PC-9 (cell line): ENCODE measurements at regions of chr15 and their contacts with region 1.

Region 1: GRCh38 chr15:29668120-29668602 is 154.1 kb downstream of the TJP1 start:
- DNase-seq: peak; percentile 36 to 76
- H3K4me3 ChIP-seq: no peak overlapping the region
- H3K27ac ChIP-seq: no peak overlapping the region
- H3K4me1 ChIP-seq: 0 out of 2 replicates have a peak, but pooled peaks cover 5% of the 10 kb centered on the region
- H3K27me3 ChIP-seq: peaks cover 16% of the 10 kb centered on the region; the same call in 1 of the 2 replicates
- CTCF ChIP-seq: peak; percentile 71

Region 2: DNA sequence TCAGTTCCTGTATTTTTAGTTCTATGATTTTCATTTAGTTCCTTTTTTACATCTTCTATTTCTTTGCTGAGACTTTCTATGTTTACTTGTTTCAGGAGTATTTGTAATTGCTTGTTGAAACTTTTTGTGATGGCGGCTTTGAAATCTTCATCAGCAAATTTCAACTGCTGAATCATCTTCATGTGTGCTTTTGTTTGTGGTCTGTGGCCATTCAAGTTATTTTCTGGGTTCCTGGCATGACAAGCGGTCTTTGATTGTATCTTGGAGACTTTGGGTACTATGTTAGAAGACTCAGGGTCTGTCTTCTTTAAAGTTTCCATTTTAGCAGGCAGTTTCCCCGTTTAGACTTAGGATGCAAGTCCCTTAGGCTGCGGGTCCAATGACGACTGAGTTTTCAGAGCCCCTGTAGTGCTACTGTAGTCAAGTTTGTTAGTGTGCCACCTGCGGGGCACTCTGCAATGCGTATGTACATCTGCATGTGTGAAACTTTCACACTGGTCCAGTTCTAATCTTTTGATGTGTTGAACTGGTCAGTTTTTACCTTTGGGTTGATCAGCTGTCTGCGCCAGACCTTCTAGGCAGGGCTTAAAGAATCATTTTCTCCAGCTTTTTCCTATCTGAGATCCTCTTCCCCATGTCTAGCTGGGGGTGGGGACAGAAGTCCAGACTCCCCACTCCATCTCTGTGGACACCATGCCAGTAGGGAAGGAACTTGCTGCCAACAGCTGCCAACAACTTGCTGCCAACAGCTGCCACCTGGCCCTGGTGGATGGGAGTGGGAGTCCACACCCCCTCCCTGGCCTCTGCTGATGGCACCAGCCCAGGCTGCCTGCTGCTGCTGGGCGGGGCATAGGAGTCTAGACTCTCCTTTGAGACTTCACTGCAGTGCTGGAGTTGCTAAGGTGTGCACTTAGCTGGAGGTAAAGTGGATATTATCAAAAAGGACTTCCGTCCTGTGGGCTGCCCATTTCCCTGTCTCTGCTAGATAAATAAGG is 36.8 kb before region 1 on chr15:
- CTCF ChIA-PET with region 1: no interaction called
- POLR2A ChIA-PET with region 1: no interaction called
- intact Hi-C with region 1: no loop called
- DNase-seq: no peak
- H3K4me3 ChIP-seq: no peak overlapping the region
- H3K27ac ChIP-seq: no peak overlapping the region
- H3K4me1 ChIP-seq: no peaks in the 10 kb centered on the region
- H3K27me3 ChIP-seq: peaks cover 75% of the 10 kb centered on the region
- CTCF ChIP-seq: no peak

Region 3: DNA sequence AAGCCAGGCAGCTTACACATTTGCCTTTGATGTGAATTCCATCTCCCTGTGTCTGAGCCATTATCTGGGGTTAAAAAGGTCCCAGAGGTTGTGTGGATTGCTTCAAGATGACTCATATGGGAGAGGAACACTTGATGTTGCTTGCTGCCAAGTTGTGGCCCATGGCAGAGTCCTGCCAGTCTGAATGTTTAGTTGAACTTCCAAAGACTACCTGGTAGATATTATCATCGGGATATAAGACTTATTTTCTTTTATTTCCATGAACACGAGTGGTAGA is 68.5 kb after region 1 on chr15:
- CTCF ChIA-PET with region 1: no interaction called
- POLR2A ChIA-PET with region 1: no interaction called
- intact Hi-C with region 1: loop called (anchors 1 kb)
- DNase-seq: peak; percentile 59 to 79
- H3K4me3 ChIP-seq: no peak overlapping the region
- H3K27ac ChIP-seq: peak overlapping the region; percentile 5
- H3K4me1 ChIP-seq: peaks cover 29% of the 10 kb centered on the region
- H3K27me3 ChIP-seq: no peaks in the 10 kb centered on the region
- CTCF ChIP-seq: no peak

Region 4: DNA sequence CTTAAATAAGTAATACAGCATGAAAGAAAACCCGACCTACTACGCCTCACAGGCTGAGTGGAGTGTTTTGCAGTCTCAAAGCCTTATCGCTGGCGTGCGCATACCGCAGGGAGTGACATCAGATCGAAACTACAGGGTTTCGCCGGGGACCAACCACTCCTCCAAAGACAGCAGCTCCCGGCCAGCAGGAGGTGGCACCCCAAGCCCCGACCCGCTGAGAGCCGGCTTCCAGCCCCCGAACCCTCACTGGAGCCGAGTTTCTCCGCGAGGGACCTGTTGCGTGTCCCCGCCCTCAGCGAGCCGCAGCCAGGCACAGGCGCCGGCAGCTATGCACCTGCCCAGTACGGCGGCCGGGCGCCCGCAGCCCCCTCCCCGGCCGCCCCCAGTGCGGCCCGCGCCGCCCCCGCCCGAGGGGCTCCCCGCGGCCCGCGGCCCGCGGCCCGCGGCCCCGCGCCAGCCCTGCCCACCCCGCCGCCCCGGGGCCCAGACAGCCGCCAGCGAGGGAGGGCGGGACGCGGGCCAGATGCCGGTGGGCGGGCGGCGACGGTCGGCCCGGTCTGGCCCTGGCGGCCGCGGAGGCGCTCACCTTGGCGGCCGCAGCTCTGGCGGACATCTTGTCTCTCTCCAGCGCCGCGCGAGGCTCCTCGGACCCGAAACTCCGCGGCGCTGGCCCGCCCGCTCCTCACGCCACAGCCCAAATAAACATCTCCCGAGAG is 153.4 kb after region 1 on chr15:
- CTCF ChIA-PET with region 1: no interaction called
- POLR2A ChIA-PET with region 1: interaction called, 8 read pairs
- intact Hi-C with region 1: loop called (anchors 5 kb)
- DNase-seq: peak; percentile 83 to 85
- H3K4me3 ChIP-seq: peak overlapping the region; percentile 74
- H3K27ac ChIP-seq: peak overlapping the region; percentile 95
- H3K4me1 ChIP-seq: peaks cover 26% of the 10 kb centered on the region
- H3K27me3 ChIP-seq: no peaks in the 10 kb centered on the region
- CTCF ChIP-seq: 0 out of 2 replicates have a peak, but pooled peaks have one; percentile 11

Region 5: GRCh38 chr15:30030350-30030749 is 362.2 kb after region 1 on chr15:
- CTCF ChIA-PET with region 1: no interaction called
- POLR2A ChIA-PET with region 1: no interaction called
- intact Hi-C with region 1: loop called (anchors 1 kb)
- DNase-seq: no peak
- H3K4me3 ChIP-seq: no peak overlapping the region
- H3K27ac ChIP-seq: no peak overlapping the region
- H3K4me1 ChIP-seq: no peaks in the 10 kb centered on the region
- H3K27me3 ChIP-seq: no peaks in the 10 kb centered on the region
- CTCF ChIP-seq: peak; percentile 43

Region 6: GRCh38 chr15:30043211-30043655 is 375.1 kb after region 1 on chr15:
- CTCF ChIA-PET with region 1: interaction called, 4 read pairs
- POLR2A ChIA-PET with region 1: no interaction called
- intact Hi-C with region 1: loop called (anchors 1 kb)
- DNase-seq: no peak
- H3K4me3 ChIP-seq: no peak overlapping the region
- H3K27ac ChIP-seq: no peak overlapping the region
- H3K4me1 ChIP-seq: no peaks in the 10 kb centered on the region
- H3K27me3 ChIP-seq: no peaks in the 10 kb centered on the region; the same call in 1 of the 2 replicates
- CTCF ChIP-seq: peak; percentile 42; the same call in 1 of the 2 replicates

Region 7: GRCh38 chr15:30073915-30074314 is 405.8 kb after region 1 on chr15:
- CTCF ChIA-PET with region 1: no interaction called
- POLR2A ChIA-PET with region 1: no interaction called
- intact Hi-C with region 1: loop called (anchors 1 kb)
- DNase-seq: no peak
- H3K4me3 ChIP-seq: no peak overlapping the region
- H3K27ac ChIP-seq: no peak overlapping the region
- H3K4me1 ChIP-seq: no peaks in the 10 kb centered on the region
- H3K27me3 ChIP-seq: no peaks in the 10 kb centered on the region
- CTCF ChIP-seq: no peak